Colonic mucosa (tissue), 4 donors: ENCODE measurements at regions of chr19 and their contacts with region 1.

Region 1: DNA sequence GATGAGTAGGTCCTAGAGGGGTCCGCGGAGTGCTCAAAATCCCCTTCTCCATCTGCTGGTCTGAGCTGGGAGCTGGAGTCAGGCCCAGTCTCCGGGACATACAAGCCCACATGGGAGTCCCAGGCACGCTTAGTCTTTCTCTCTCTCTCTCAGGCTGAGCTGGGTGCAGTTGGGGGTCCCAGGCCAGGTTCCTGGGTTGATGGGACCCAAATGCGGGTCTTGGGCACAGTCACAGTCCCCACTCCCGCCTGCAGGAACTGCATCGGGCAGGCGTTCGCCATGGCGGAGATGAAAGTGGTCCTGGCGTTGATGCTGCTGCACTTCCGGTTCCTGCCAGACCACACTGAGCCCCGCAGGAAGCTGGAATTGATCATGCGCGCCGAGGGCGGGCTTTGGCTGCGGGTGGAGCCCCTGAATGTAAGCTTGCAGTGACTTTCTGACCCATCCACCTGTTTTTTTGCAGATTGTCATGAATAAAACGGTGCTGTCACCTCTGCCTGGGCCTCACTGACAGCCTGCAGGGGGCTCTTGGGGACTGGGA is 23.8 kb downstream of the CYP4F12 start:
- DNase-seq: no peak
- H3K4me3 ChIP-seq: no peak overlapping the region
- H3K27ac ChIP-seq: no peak overlapping the region
- H3K4me1 ChIP-seq: no peaks in the 10 kb centered on the region
- H3K27me3 ChIP-seq: no peaks in the 10 kb centered on the region
- CTCF ChIP-seq: no peak

Region 2: GRCh38 chr19:15498911-15499317 is 197.8 kb before region 1 on chr19:
- intact Hi-C with region 1: no loop called
- DNase-seq: no peak
- H3K4me3 ChIP-seq: no peak overlapping the region
- H3K27ac ChIP-seq: no peak overlapping the region
- H3K4me1 ChIP-seq: no peaks in the 10 kb centered on the region
- H3K27me3 ChIP-seq: no peaks in the 10 kb centered on the region
- CTCF ChIP-seq: no peak

Region 3: GRCh38 chr19:15679089-15679488 is 17.6 kb before region 1 on chr19:
- intact Hi-C with region 1: loop called (anchors 2 kb)
- DNase-seq: no peak
- H3K4me3 ChIP-seq: no peak overlapping the region
- H3K27ac ChIP-seq: no peak overlapping the region
- H3K4me1 ChIP-seq: no peaks in the 10 kb centered on the region
- H3K27me3 ChIP-seq: no peaks in the 10 kb centered on the region
- CTCF ChIP-seq: no peak

Region 4: DNA sequence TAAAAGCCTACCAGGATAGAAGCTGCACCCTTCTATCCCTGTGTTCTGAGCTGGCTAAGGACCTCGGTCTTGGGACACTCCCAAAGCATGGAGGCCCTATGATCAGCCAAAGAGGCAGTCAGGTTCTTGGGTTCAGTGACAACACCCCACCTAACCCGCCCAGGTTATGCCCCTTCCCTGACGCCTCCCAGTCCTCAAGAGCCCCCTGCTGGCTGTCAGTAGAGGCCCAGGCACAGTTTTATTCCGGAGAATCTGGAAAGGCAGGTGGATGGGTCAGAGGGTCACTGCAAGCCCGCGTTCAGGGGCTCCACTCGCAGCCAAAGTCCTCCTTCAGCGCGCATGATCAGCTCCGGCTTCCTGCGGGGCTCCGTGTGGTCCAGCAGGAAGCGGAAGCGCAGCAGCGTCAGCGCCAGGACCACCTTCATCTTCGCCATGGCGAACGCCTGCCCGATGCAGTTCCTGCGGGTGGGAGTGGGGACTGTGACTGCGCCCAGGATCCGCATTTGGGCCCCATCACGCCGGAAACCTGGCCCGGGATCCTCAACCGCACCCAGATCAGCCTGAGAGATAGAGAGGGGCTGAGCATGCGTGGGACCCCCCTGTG is 63.3 kb after region 1 on chr19:
- intact Hi-C with region 1: no loop called
- DNase-seq: peak; percentile 26
- H3K4me3 ChIP-seq: no peak overlapping the region
- H3K27ac ChIP-seq: no peak overlapping the region
- H3K4me1 ChIP-seq: no peaks in the 10 kb centered on the region
- H3K27me3 ChIP-seq: no peaks in the 10 kb centered on the region
- CTCF ChIP-seq: peak; percentile 41